ENCODE measurements at regions of chr20 and their contacts with region 1.

Region 1: GRCh38 chr20:10641467-10641866 is 32.3 kb downstream of the JAG1 start:
- DNase-seq: no peak
- H3K4me3 ChIP-seq: no peak overlapping the region
- H3K27ac ChIP-seq: no peak overlapping the region
- H3K4me1 ChIP-seq: no peaks in the 10 kb centered on the region
- H3K27me3 ChIP-seq: no peaks in the 10 kb centered on the region
- CTCF ChIP-seq: no peak

Region 2: DNA sequence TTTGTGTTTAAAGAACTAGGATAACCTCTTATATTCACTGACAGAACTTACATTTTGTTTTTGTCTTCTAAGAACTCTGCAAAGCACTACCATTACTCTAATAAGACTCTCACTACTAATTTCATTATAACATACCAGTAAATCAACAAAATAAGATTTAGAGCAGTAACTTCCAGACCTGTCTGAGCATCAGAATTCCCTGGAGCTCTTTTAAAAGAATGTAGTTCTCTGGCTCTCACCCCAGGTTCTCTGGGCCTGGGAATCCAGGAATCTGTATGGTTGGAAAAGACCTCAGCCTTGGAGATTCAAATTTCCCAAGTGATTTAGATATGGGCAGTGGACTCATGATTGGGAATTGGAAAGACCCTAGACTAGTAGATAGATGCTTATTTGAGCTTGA is 57.1 kb before region 1 on chr20:
- CTCF ChIA-PET with region 1: no interaction called
- POLR2A ChIA-PET with region 1: interaction called, 13 read pairs
- intact Hi-C with region 1: no loop called
- DNase-seq: no peak
- H3K4me3 ChIP-seq: no peak overlapping the region
- H3K27ac ChIP-seq: no peak overlapping the region
- H3K4me1 ChIP-seq: peaks cover 12% of the 10 kb centered on the region
- H3K27me3 ChIP-seq: no peaks in the 10 kb centered on the region
- CTCF ChIP-seq: no peak

Region 3: DNA sequence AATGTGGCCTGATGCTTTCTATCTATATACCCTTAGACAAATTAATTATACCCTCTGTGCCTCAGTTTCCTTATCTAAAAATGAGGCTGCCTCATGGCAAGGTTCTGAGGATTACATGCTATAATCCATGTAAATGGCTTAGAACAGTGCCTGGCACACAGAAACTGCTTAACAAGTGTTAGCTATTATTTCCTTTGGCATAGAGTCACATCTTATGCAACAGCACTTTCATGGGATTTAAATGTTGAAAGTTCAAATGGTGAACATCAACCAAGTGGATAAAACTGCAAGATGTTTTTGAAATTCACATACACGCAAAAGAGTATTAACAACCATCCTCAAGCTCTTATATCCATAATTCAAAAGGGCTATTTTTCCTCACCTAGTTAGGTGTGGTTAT is 235.1 kb after region 1 on chr20:
- CTCF ChIA-PET with region 1: no interaction called
- POLR2A ChIA-PET with region 1: no interaction called
- intact Hi-C with region 1: no loop called
- DNase-seq: no peak
- H3K4me3 ChIP-seq: no peak overlapping the region
- H3K27ac ChIP-seq: no peak overlapping the region
- H3K4me1 ChIP-seq: no peaks in the 10 kb centered on the region
- H3K27me3 ChIP-seq: no peaks in the 10 kb centered on the region
- CTCF ChIP-seq: no peak

Measured in PC-9 (cell line).